RWPE1 (cell line): ENCODE measurements at regions of chr2 and their contacts with region 1.

Region 1: GRCh38 chr2:219530048-219530963 is 13.3 kb downstream of the CHPF start:
- DNase-seq: peak; percentile 85
- H3K27ac ChIP-seq: no peak overlapping the region
- CTCF ChIP-seq: peak; percentile 93

Region 2: DNA sequence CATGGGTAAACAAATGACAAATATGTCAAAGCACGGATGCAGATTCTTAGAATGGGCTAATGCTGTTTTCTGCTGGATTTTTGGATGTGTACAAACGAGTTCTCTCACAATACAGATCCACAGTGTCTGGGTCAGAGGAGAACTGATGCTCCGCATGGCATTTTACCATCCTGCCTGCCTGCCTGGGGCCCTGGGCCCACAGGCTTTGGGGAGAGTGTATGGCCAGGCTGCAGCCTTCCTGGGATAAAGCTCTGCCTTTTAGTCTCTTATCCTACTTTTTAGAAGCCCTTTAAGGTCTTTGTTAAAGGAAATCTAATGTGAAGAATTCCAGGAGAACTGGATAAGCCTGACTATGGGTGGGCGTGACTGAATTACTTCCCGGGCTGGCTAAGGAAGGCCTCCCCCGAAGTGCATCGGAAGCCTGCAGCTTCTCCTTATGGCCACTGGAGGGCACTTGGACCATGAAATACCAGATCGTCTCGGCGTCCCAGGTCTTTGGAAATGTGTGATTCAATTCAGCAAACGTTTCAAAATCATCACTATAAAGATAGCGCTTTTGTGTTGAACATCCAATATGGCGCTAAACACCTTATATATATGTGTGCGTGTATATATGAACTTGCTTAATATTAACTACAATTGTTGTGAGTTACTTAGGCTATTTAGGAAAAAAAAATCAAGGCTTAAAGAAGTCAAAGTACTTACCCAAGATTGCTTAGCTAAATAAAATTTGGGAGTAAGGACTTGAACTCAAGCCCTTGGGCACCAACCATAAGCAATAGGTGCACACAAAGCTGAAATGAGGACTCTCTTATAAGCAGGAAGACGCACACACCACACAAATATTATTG is 127.4 kb before region 1 on chr2:
- CTCF ChIA-PET with region 1: interaction called, 96 read pairs
- POLR2A ChIA-PET with region 1: no interaction called
- DNase-seq: peak; percentile 76
- H3K27ac ChIP-seq: no peak overlapping the region
- CTCF ChIP-seq: peak; percentile 92

Region 3: DNA sequence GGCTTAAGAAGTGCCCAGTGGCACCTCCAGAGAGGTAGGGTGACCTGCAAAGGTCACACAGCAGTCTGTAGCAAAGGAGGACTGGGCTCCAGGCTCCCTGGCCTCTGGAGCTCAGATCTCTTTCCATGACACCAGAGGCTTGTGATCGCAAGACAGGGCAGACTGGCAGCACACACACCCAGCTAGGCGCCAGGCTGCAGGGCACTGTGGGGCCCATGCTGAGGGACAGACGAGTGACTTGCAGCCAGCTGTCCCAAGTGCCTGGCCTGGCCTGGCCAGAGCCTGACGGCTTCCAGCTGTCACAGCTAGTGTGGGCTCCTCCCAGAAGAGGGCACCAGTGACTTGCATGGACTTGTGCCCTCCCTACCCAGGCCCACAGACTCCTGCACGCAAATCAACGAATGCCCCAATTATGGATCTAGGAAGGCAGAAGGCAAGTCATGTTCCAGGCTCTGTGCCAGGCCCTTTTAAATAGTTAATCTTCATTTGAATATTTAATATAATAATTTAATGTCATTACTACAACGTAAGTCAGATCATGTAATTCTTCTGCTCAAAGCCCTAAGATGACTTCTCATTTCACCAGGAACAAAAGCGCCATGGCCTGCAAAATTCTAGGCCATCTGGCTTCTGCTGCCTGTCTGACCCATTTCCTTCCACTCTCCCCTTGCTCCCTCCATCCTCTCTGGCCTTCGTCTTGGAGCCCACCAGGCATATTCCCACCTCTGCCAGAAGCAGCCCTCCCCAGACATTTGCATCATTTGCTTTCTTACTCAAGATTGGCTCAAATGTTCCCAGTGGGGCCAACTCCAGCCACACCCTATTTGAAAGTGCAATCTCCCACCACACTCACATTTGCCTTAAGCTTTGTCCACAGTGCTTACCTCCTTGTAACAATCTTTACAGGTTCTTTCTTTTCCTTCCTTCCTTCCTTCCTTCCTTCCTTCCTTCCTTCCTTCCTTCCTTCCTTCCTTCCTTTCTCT is 99.4 kb before region 1 on chr2:
- CTCF ChIA-PET with region 1: interaction called, 18 read pairs
- POLR2A ChIA-PET with region 1: no interaction called
- DNase-seq: peak; percentile 40
- H3K27ac ChIP-seq: no peak overlapping the region
- CTCF ChIP-seq: no peak; the same call in 1 of the 2 replicates

Region 4: GRCh38 chr2:219459460-219460311 is 70.6 kb before region 1 on chr2:
- CTCF ChIA-PET with region 1: interaction called, 34 read pairs
- POLR2A ChIA-PET with region 1: no interaction called
- DNase-seq: peak; percentile 60
- H3K27ac ChIP-seq: no peak overlapping the region
- CTCF ChIP-seq: peak; percentile 89

Region 5: DNA sequence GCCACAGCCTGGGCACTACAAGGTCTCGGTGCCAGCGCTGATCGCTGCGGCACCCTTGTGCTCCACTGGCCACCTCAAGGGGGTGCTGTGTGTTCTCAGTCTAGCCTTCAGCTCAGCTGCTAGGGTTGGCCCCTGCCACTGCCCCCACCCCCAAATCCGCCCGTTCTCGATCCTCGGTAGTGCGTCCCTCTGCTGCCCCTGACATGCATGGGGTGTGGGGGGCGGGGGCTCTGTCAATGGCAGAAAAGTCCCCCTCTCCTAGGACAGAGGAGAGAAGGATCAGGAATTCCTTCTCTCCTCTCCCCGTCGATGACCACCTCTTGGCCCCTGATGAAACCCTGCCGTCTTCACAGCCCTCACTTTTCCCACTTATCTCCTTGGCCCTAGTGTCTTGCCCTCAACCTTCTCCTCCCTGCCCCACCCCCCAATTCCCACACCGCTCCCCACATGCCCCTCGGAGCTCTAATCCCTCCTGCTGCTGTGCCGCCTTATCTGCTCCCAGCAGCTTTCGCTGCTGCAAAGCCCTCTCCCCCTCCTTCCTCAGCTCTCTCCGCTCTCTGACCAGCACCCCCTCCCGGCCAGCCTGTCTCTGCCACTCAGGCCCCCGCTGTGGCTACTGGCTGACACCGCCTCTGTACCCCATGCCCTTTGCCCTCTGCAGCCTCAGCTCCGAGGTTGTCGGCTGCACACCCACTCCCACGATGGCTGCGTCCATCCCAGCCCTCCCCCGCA is 20.4 kb before region 1 on chr2:
- CTCF ChIA-PET with region 1: interaction called, 26 read pairs
- POLR2A ChIA-PET with region 1: no interaction called
- DNase-seq: peak; percentile 37
- H3K27ac ChIP-seq: no peak overlapping the region
- CTCF ChIP-seq: peak; percentile 68

Region 6: GRCh38 chr2:219543601-219544358 is 13.5 kb after region 1 on chr2 and contains the starts of genes CHPF and TMEM198:
- CTCF ChIA-PET with region 1: interaction called, 25 read pairs
- POLR2A ChIA-PET with region 1: no interaction called
- DNase-seq: peak; percentile 99
- H3K27ac ChIP-seq: peak within 1 kb of the TSS; percentile 94
- CTCF ChIP-seq: no peak

Region 7: DNA sequence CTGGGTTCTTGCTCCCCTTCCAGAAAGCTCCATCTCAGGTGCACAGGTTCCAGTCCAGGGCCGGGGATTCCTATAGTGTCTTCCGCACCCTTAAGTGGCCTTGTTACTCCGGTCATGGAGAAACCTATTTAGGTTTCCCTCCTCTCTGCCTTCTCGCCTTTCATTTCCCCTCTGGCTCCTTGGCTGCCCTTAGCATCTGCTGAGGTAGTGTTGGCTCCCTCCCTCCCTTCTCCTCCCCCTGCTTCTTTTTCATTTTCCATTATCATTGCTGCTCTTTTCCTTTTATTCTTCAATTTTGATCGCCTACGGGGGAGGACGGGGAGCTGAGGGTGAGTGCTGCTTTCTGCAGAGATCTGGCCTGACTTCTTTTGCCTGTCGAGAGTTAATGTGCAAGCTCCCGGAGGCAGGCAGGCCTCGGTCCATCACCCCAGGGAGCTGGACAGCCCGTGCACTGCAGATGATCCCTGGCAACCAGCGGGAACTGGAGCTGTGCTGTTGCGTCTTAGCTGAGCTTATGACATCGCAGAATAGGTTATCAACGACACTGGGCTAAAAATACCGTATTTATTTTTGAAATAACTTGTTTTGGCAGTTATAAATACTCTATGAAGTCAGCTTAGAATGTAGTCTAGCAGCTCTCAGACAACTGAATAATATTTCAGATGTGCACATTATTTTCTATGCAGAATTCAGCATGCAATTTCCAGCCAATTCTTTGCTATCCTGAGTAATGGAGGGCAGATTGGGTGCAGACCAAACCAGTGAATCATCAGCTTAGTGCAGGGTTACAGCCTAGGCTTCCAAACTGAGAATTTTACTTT is 239.0 kb after region 1 on chr2:
- CTCF ChIA-PET with region 1: no interaction called
- POLR2A ChIA-PET with region 1: no interaction called
- DNase-seq: no peak
- H3K27ac ChIP-seq: no peak overlapping the region
- CTCF ChIP-seq: no peak